B cell (primary cell): ENCODE measurements at regions of chr3 and their contacts with region 1.

Region 1: DNA sequence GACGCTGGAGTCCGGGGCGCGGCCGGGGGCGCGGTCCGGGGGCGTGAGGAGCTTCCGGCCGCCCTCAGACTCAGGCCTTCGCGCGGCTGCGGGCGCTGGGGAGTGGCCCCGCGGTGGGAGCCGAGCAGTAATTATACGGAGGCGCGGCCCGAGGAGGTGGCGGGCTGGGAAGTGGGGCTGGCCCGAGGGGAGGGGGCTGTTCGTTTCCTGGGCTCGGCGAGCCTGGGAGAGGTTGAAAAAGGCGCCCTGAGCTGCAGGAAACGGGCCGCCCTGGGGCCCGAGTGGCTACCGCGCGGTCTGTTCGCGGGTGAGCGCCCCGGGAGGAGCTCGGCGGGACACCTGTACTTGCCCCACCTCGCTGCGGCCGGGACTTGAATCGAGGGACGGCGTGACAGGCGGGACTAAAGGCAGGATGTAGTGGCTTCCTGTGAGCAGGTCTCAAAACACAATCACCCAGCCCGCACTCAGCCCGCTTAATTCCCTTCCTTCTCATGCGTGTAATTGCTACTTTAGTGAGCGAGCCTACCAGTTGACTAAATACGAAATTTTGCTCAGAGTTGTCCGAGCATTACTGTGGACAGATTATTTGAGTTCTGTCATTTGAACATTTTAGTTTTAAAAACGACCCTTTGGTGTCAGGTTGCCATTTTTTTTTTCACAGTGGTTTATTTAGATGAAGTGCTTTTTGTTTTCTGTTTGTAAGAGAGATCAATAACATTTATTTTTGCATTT is 860 bp downstream of the RASA2 start:
- DNase-seq: peak; percentile 91
- ATAC-seq: peak; percentile 70
- H3K4me3 ChIP-seq: peak overlapping the region; percentile 48 to 96 (median 67)
- H3K4me3 Mint-ChIP-seq: peak overlapping the region; percentile 88
- H3K27ac ChIP-seq: peak overlapping the region; percentile 83 to 91
- H3K27ac Mint-ChIP-seq: peak overlapping the region; percentile 93
- H3K4me1 ChIP-seq: peaks cover 45 to 66% of the 10 kb centered on the region in 2 donors
- H3K4me1 Mint-ChIP-seq: peaks cover 70% of the 10 kb centered on the region
- H3K27me3 ChIP-seq: no peaks in the 10 kb centered on the region
- H3K27me3 Mint-ChIP-seq: no peaks in the 10 kb centered on the region
- CTCF ChIP-seq: no peak

Region 2: DNA sequence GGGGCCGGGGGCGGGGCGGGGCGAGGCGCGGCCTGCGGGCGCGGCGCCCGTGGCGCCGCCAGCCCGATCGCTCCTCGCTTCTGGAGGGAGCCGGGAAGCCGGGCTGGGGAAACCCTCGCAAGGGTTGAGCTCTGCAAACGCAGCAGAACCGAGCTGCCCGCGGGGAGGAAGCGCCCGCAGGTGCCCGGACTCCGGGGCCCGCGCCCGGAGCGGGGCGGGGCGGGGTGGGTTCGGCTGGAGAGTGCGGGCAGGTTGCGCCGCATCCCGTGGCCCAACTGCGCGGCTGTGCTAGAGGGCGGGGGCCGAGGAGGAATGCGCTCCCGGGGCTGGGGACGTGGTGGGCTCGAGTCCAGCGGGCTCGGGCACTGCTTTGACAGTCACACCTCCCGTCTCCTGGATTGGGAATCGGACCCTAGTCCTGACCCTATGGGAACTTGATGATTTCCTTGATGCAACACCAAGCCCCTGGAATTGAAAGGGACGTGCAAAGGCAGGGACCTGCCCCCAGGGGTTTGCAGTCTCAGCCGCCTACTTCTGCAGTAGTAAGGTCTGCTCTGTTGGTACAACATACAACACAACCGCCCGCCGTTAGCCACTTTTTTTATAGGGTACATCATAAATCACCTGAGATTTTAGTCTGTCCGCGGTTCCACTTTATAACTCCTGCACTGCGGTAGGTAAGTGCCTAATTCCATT is 85.1 kb before region 1 on chr3:
- CTCF ChIA-PET with region 1: no interaction called
- POLR2A ChIA-PET with region 1: no interaction called
- intact Hi-C with region 1: loop called (anchors 2 kb)
- DNase-seq: no peak
- ATAC-seq: peak; percentile 61
- H3K4me3 ChIP-seq: peak overlapping the region; percentile 37 to 83 (median 78)
- H3K4me3 Mint-ChIP-seq: peak overlapping the region; percentile 95
- H3K27ac ChIP-seq: peak overlapping the region; percentile 35 to 90
- H3K27ac Mint-ChIP-seq: peak overlapping the region; percentile 98
- H3K4me1 ChIP-seq: peaks cover 8 to 14% of the 10 kb centered on the region in 2 donors
- H3K4me1 Mint-ChIP-seq: peaks cover 48% of the 10 kb centered on the region
- H3K27me3 ChIP-seq: no peaks in the 10 kb centered on the region
- H3K27me3 Mint-ChIP-seq: no peaks in the 10 kb centered on the region
- CTCF ChIP-seq: no peak

Region 3: GRCh38 chr3:141498598-141499223 is 11.0 kb after region 1 on chr3:
- CTCF ChIA-PET with region 1: interaction called, 15 read pairs
- POLR2A ChIA-PET with region 1: interaction called, 46 read pairs
- intact Hi-C with region 1: loop called (anchors 1 kb)
- DNase-seq: peak; percentile 95
- ATAC-seq: peak; percentile 91
- H3K4me3 ChIP-seq: peak overlapping the region in 4 of 5 experiments; percentile 35 to 57 (median 42)
- H3K4me3 Mint-ChIP-seq: peak overlapping the region; percentile 79
- H3K27ac ChIP-seq: peak overlapping the region; percentile 69 to 87
- H3K27ac Mint-ChIP-seq: peak overlapping the region; percentile 91
- H3K4me1 ChIP-seq: peaks cover 19 to 35% of the 10 kb centered on the region in 2 donors
- H3K4me1 Mint-ChIP-seq: peaks cover 57% of the 10 kb centered on the region
- H3K27me3 ChIP-seq: no peaks in the 10 kb centered on the region
- H3K27me3 Mint-ChIP-seq: no peaks in the 10 kb centered on the region
- CTCF ChIP-seq: no peak

Region 4: DNA sequence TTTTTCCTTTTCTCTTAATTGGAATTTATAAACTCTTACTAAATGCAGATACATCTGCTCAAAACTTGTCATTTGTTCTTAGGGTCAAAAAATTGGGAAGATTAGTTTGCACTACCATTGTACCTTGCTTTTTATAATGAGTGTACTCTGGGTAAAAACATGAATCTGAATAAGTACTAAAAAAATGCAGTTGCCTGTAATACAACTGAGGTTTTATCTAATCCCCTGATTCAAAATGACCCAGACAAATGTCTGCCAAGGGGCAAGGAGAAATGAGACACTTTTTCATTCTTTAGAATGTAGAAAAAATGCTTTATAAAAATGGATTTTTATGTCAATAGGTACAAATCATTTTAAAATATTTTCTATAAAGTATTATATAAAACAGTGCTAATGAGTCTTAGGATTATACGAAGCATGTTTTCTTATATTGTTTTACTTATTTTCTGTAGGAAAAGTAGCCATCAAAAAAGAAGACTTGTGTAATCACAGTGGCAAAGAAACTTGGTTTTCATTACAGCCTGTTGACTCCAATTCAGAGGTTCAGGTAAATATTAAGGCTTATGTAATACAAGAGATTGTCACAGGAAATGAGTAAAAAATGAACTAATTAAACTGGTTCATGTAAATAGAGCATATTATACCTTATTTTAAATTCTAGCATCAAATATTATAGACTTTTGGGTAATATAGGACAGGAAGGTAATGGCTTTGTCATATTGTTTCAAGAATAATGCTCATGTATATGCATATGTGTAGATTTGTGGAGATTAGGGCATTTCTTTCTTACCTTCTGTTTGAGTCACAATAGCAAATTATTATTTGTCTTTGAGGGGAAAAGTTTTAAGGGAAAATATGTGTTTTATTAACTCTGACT is 41.8 kb after region 1 on chr3:
- CTCF ChIA-PET with region 1: interaction called, 3 read pairs
- POLR2A ChIA-PET with region 1: interaction called, 3 read pairs
- intact Hi-C with region 1: loop called (anchors 5 kb)
- DNase-seq: no peak
- ATAC-seq: no peak
- H3K4me3 ChIP-seq: peak overlapping the region in 2 of 5 experiments; percentile 31 to 39
- H3K4me3 Mint-ChIP-seq: peak overlapping the region; percentile 72
- H3K27ac ChIP-seq: peak overlapping the region; percentile 49 to 80
- H3K27ac Mint-ChIP-seq: peak overlapping the region; percentile 82
- H3K4me1 ChIP-seq: peaks cover 36 to 69% of the 10 kb centered on the region in 2 donors
- H3K4me1 Mint-ChIP-seq: peaks cover 65% of the 10 kb centered on the region
- H3K27me3 ChIP-seq: no peaks in the 10 kb centered on the region
- H3K27me3 Mint-ChIP-seq: no peaks in the 10 kb centered on the region
- CTCF ChIP-seq: no peak